WTC11 (cell line): ENCODE measurements at regions of chr5 and their contacts with region 1.

Region 1: DNA sequence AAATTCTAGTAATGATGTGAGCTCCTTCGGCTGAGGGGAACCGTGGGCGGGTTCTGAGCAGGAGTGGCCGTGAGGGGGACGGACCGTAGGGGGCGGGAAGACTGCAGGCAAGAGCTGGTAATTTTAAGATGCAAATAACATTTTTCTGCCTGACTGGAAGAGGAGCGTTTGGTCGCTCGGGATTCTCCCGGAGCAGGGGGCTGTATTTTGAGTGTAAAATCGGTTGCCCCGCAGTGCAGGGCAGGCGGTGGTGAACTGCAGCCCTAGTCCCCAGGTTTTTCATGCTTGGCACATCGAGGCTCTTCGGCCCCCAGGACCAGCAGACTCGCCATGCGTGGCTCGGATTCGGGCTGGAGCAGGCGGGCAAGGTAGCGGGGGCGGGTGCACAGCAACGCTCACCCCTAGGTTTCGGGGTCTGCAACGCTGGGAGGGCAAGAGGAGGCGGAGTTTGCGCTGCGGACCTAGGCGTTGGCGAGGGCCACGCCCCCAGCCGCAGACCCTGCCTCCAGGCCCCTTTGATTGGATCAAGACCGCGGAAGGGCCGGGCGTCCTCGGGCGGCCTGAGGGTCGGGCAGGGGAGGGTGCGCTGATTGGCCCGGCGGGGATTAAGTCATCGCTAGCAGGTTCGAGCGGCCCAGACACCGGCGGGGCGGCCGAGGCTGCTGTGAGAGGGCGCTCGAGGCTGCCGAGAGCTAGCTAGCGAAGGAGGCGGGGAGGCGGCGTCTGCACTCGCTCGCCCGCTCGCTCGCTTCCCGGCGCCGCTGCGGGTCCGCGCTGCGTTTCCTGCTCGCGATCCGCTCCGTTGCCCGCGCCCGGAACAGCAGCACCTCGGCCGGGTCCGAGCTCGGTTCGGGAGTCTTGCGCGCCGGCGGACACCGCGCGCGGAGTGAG is at the start of gene ARHGAP26:
- DNase-seq: peak; percentile 98
- ATAC-seq: peak; percentile 96
- H3K4me3 Mint-ChIP-seq: peak within 1 kb of the TSS; percentile 93
- H3K27ac Mint-ChIP-seq: peak within 1 kb of the TSS; percentile 90
- H3K4me1 Mint-ChIP-seq: peaks cover 36% of the 10 kb centered on the region
- H3K27me3 Mint-ChIP-seq: peaks cover 12% of the 10 kb centered on the region; the same call in 1 of the 2 replicates
- CTCF ChIP-seq: no peak
- total RNA-seq, gene ARHGAP26: 19.1 to 22.3 TPM (median 21.8 TPM) in 3 replicates

Region 2: DNA sequence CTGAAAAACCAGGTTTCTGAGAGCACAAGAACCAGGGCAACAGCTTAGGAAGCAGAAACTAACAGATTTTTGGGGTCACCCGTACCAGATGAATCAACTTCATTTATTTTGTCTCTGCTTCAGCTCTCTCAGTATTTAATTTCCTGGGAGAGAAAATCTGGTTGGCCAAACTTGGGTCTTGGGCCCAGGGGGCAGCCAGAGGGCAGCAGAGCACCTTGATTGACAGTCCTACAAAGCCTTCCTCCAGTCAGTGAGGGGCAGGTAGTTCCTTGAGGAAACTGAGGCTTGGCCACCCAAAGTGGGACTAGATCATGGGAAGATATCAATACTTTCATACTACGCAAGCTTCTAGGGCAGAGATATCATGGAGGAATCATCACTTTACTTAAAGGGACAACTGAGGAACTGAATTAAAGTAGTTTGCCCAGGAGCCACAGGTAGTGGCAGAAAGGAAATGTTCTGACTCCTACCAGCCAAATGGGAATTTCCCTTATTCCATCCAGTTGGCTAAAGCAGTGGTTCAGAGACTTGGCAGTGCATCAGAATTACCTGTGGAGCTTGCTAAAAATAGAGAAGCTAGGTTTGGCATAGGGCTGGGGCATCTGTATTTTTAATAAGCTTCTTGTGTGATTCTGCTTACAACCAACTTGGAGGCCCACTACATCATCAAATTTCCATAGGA is 21.3 kb before region 1 on chr5:
- CTCF ChIA-PET with region 1: interaction called, 24 read pairs
- POLR2A ChIA-PET with region 1: no interaction called
- DNase-seq: peak; percentile 53
- ATAC-seq: peak; percentile 75
- H3K4me3 Mint-ChIP-seq: no peak overlapping the region
- H3K27ac Mint-ChIP-seq: no peak overlapping the region
- H3K4me1 Mint-ChIP-seq: peaks cover 7% of the 10 kb centered on the region
- H3K27me3 Mint-ChIP-seq: no peaks in the 10 kb centered on the region
- CTCF ChIP-seq: peak; percentile 51; the same call in 1 of the 2 replicates

Region 3: DNA sequence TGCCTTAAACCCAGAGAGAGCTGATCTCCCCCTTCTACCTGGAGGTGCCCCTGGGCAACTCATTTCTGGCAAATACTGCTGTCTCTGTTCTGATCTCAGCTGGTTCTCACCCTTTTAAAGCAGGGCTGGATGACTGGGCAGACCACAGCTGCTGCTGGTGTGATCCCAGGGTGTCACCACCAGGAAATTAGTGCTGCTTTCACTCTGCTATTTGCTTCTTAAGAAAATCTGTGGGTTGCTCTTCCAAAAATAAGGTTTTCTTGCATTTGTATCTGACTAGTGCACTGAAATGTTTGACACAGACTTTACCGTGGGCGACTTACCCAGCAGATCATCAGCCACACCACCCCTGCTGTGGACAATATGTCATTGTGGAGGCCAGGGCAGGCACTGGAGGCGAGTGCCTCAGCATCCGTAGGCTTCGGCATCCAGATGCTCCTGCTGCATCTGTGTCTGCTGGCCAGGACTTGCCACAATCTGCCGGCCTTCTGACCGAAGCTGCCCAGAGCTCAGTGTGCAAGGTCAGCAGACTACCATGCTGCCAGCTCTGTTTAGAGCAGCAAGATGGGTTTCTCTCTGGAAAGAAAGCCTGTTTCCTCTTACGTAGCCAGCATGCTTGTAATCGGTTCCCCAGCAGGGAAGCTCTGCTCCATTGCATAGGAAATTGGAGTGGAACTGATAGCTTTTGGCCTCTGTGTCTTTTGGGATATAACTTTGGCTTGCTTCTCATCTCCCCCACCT is 13.8 kb after region 1 on chr5:
- CTCF ChIA-PET with region 1: interaction called, 25 read pairs
- POLR2A ChIA-PET with region 1: interaction called, 9 read pairs
- DNase-seq: no peak
- ATAC-seq: peak; percentile 27
- H3K4me3 Mint-ChIP-seq: peak overlapping the region; percentile 29; the same call in 1 of the 2 replicates
- H3K27ac Mint-ChIP-seq: peak overlapping the region; percentile 91
- H3K4me1 Mint-ChIP-seq: peaks cover 50% of the 10 kb centered on the region
- H3K27me3 Mint-ChIP-seq: no peaks in the 10 kb centered on the region
- CTCF ChIP-seq: no peak

Region 4: DNA sequence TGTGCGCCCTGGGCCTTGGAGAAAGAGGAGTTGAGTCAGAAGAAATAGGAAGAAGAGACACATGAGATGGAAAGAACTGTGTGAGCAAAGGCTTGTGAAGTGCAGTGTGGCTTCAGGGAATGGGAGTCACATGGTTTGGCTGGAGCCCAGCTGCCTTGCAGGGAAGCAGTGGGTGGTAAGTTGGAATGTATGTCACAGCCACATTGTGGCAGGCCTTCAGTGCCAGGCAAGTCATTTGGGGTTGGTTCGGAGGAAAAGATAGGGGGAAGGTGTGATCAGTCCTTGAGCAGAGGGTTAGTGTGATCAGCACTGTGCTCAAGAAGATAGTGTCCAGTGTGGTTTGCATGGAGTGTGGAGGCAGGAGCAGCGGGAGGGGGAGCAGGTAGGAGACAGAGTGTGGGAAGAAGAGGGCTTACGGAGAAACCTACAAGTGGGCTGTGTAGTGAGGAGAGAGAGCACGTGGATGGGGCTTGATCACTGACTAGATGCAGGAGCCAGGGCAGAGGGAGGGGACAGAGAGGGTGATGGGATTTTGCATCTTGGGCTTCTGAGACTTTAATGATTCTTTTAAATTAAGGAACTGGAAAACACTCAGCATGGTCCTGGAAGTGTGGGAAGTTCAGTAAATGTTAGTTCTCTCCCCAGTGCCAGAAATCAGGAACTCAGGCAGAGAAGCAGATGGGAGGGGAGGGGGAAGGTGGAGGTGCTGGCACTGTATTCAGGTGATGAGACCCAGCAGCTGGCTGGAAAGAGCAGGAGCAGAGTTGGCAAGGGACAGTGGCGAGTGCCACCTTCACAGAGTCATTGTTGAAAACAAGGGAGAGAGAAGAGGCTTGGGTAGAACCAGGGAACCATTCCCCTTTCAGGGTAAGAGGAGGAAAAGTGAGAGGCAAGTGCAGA is 46.8 kb after region 1 on chr5:
- CTCF ChIA-PET with region 1: no interaction called
- POLR2A ChIA-PET with region 1: no interaction called
- DNase-seq: no peak
- ATAC-seq: peak; percentile 21
- H3K4me3 Mint-ChIP-seq: no peak overlapping the region
- H3K27ac Mint-ChIP-seq: peak overlapping the region; percentile 18
- H3K4me1 Mint-ChIP-seq: peaks cover 27% of the 10 kb centered on the region
- H3K27me3 Mint-ChIP-seq: no peaks in the 10 kb centered on the region
- CTCF ChIP-seq: no peak

Region 5: DNA sequence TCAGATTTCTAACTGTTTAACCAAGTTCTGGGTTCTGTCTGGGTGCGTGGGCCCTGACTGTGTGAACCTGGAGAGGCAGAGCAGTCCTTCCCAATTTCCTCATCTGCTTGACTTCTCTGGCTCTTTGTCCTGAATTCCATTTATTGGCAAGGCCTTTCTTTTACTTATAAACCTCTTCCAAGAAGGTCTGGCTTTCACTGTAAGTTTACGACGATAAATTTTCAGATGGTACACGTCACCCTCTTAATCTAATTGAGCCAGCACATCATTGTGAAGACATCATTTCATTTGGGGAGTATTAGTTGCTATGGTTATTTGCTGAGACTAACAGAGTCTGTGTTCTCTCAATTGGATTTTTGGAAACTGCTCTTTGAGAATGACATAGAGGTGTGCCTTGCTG is 92.6 kb after region 1 on chr5:
- CTCF ChIA-PET with region 1: interaction called, 46 read pairs
- POLR2A ChIA-PET with region 1: interaction called, 4 read pairs
- DNase-seq: no peak
- ATAC-seq: no peak
- H3K4me3 Mint-ChIP-seq: no peak overlapping the region
- H3K27ac Mint-ChIP-seq: peak overlapping the region; percentile 88
- H3K4me1 Mint-ChIP-seq: peaks cover 83% of the 10 kb centered on the region
- H3K27me3 Mint-ChIP-seq: no peaks in the 10 kb centered on the region
- CTCF ChIP-seq: no peak

Region 6: GRCh38 chr5:142874537-142874936 is 104.6 kb after region 1 on chr5:
- CTCF ChIA-PET with region 1: interaction called, 18 read pairs
- POLR2A ChIA-PET with region 1: interaction called, 6 read pairs
- DNase-seq: no peak
- ATAC-seq: no peak
- H3K4me3 Mint-ChIP-seq: no peak overlapping the region
- H3K27ac Mint-ChIP-seq: no peak overlapping the region
- H3K4me1 Mint-ChIP-seq: peaks cover 47% of the 10 kb centered on the region
- H3K27me3 Mint-ChIP-seq: no peaks in the 10 kb centered on the region
- CTCF ChIP-seq: no peak

Region 7: GRCh38 chr5:142881076-142881783 is 111.2 kb after region 1 on chr5:
- CTCF ChIA-PET with region 1: interaction called, 29 read pairs
- POLR2A ChIA-PET with region 1: interaction called, 3 read pairs
- DNase-seq: no peak
- ATAC-seq: peak; percentile 73
- H3K4me3 Mint-ChIP-seq: no peak overlapping the region
- H3K27ac Mint-ChIP-seq: no peak overlapping the region; the same call in 1 of the 2 replicates
- H3K4me1 Mint-ChIP-seq: peaks cover 44% of the 10 kb centered on the region
- H3K27me3 Mint-ChIP-seq: no peaks in the 10 kb centered on the region
- CTCF ChIP-seq: no peak